Vagina (tissue), 2 donors: ENCODE measurements at regions of chr2 and their contacts with region 1.

Region 1: GRCh38 chr2:211049321-211050018 is 493.1 kb downstream of the CPS1 start:
- DNase-seq: no peak
- H3K4me3 ChIP-seq: no peak overlapping the region
- H3K27ac ChIP-seq: no peak overlapping the region
- H3K4me1 ChIP-seq: no peaks in the 10 kb centered on the region
- H3K27me3 ChIP-seq: no peaks in the 10 kb centered on the region
- CTCF ChIP-seq: no peak
- POLR2A ChIP-seq: no peak

Region 2: DNA sequence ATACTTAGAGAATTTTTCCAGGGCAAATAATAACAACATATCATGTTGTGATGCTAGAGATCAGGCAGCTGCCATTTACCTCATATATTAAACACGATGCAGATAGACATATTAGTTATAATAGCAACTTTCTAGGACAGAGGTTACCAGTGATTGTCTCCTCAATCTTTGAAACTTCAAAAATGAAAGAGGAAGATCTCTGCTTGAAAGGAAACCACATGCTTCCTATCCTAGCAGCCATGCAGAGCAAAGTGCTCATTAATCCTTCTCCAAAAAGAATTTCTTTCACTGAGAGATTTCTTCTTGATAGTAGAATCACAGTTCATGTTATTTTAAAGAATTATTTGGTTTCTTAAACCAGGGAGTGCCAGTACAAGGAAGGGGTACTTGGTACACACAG is 175.8 kb before region 1 on chr2:
- intact Hi-C with region 1: loop called (anchors 5 kb)
- DNase-seq: no peak
- H3K4me3 ChIP-seq: no peak overlapping the region
- H3K27ac ChIP-seq: no peak overlapping the region
- H3K4me1 ChIP-seq: no peaks in the 10 kb centered on the region
- H3K27me3 ChIP-seq: no peaks in the 10 kb centered on the region
- CTCF ChIP-seq: no peak
- POLR2A ChIP-seq: no peak